Transverse colon (tissue), 4 donors: ENCODE measurements at regions of chr9 and their contacts with region 1.

Region 1: GRCh38 chr9:127396808-127397497 is at the start of gene SLC2A8:
- DNase-seq: peak; percentile 99
- H3K4me3 ChIP-seq: peak within 1 kb of the TSS; percentile 57 to 98 (median 82)
- H3K27ac ChIP-seq: peak within 1 kb of the TSS; percentile 89 to 96 (median 95)
- H3K4me1 ChIP-seq: peaks cover 7 to 22% (median 12%) of the 10 kb centered on the region in 4 donors
- H3K27me3 ChIP-seq: no peaks in the 10 kb centered on the region
- CTCF ChIP-seq: peak in 4 of 5 experiments; percentile 8 to 70 (median 32)
- EP300 ChIP-seq: no peak
- POLR2A ChIP-seq: peak; percentile 88
- total RNA-seq, gene SLC2A8: 9.6 to 95.8 (median 29.4) TPM

Region 2: DNA sequence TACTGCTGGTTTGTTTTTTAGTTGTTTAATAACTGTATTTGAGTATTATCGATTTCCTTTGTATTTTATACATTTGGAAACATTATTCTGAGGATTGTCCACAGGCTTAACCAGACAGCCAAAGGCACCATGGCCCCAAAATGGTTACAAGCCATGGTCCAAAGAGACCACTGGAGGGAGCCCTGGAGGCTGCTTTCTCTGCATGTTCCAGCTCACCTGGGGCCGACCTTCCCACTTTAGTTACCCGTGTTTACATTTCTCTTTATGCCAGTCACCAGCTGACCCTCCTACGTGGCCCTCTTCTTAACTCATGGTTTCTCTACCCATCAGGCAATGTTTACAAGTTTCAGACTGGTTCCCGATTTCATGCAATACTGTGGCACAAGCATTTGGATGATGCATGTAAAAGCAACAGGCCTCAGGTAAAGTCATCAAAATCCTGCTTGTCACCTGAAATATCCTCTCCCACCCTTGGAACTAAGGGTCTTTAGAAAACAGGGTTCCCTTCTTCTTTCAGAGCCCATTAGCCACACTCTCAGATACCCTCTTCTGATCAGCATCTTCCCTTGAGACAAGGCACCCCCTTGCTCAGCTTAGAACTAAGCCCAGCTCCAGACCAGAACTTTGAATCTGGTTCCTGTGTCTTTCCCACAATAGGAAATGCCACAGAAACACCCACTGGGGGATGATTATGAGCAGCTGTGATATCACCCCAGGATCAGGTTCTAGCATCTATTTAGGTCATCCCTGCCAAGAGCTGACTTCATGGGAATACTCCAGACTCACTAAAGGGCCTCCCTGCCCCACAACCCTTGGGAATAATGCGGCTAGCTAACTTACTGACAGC is 182.3 kb before region 1 on chr9:
- in situ Hi-C with region 1: no loop called
- intact Hi-C with region 1: loop called (anchors 10 kb)
- DNase-seq: peak; percentile 63
- H3K4me3 ChIP-seq: no peak overlapping the region
- H3K27ac ChIP-seq: no peak overlapping the region
- H3K4me1 ChIP-seq: no peaks in the 10 kb centered on the region
- H3K27me3 ChIP-seq: no peaks in the 10 kb centered on the region
- CTCF ChIP-seq: peak; percentile 64 to 76 (median 73)
- EP300 ChIP-seq: no peak
- POLR2A ChIP-seq: no peak

Region 3: GRCh38 chr9:127451725-127452480 is 55.0 kb after region 1 on chr9:
- in situ Hi-C with region 1: no loop called
- intact Hi-C with region 1: loop called (anchors 2 kb)
- DNase-seq: peak; percentile 58
- H3K4me3 ChIP-seq: peak overlapping the region; percentile 61 to 72 (median 66)
- H3K27ac ChIP-seq: peak overlapping the region; percentile 94 to 98 (median 94)
- H3K4me1 ChIP-seq: peaks cover 20 to 41% (median 35%) of the 10 kb centered on the region in 4 donors
- H3K27me3 ChIP-seq: no peaks in the 10 kb centered on the region
- CTCF ChIP-seq: no peak
- EP300 ChIP-seq: no peak
- POLR2A ChIP-seq: no peak